Panc1 (cell line): ENCODE measurements at regions of chr1 and their contacts with region 1.

Region 1: DNA sequence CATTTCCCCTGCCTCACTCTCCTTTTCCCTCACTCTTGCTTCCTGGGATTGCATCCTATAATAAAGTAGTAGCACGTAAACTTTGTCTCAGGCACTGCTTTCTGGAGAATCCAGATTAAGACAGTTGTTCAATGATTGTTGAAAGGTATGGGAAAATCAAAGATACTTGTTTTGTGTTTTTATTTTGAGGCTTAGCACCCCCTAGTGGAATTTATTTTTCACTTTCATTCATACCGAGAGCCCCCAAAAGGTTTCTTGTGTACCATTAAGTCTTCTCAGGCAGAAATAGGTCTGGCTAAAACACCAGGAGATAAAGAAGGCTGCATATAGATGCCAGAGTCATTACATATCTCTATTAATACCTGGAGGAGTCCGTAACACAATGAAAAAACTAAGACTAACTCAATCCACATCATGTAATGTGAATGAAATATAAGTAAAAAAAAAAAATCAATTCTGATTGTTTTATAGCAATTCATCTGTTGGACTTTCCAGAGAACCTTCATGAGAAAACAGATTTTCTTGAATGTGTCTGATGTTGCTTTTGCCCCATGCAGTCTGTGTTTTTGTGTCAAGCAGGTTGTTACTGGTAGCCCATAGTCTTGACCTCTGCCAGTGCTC is 103.5 kb downstream of the RPE65 start:
- DNase-seq: no peak
- ATAC-seq: no peak
- H3K4me3 ChIP-seq: no peak overlapping the region
- H3K27ac ChIP-seq: no peak overlapping the region
- H3K4me1 ChIP-seq: no peaks in the 10 kb centered on the region
- H3K27me3 ChIP-seq: no peaks in the 10 kb centered on the region
- CTCF ChIP-seq: peak; percentile 62; the same call in 1 of the 2 replicates

Region 2: DNA sequence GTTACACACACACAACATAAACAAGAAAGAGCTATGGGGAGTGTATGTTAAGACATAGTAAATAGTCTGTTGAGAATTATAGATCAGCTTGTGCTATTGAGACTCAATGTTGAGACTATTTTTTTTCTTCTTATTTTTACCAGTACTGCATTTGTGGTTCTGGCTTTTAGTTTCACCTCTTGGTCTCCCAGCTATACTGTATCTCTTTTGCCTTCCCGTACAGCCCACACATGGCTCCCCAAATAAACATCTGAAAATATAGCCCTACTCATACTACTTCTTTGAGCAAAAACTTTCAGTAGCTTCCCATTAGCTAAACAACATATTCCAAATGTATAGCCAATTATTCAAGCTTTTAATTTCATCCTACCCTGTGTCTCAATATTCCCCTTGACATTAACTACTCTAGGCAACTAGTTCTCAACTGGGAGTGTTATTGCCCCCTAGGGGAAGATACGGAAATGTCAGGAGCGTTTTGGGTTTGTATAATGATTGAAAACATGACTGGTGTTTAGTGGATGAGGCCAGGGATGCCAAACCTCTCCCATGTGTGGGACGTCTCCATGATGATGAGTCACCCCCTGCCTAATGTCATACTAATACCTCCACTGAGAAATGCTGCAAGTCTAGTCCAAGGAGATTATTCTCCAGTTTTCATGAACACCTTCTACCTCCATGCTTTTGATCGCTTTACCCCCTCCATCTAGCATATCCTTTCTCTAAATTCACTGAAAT is 96.7 kb after region 1 on chr1:
- CTCF ChIA-PET with region 1: no interaction called
- POLR2A ChIA-PET with region 1: no interaction called
- in situ Hi-C with region 1: no loop called
- intact Hi-C with region 1: loop called (anchors 10 kb)
- DNase-seq: peak; percentile 48
- ATAC-seq: peak; percentile 81
- H3K4me3 ChIP-seq: no peak overlapping the region
- H3K27ac ChIP-seq: no peak overlapping the region
- H3K4me1 ChIP-seq: no peaks in the 10 kb centered on the region
- H3K27me3 ChIP-seq: no peaks in the 10 kb centered on the region; the same call in 1 of the 2 replicates
- CTCF ChIP-seq: peak; percentile 79

Region 3: DNA sequence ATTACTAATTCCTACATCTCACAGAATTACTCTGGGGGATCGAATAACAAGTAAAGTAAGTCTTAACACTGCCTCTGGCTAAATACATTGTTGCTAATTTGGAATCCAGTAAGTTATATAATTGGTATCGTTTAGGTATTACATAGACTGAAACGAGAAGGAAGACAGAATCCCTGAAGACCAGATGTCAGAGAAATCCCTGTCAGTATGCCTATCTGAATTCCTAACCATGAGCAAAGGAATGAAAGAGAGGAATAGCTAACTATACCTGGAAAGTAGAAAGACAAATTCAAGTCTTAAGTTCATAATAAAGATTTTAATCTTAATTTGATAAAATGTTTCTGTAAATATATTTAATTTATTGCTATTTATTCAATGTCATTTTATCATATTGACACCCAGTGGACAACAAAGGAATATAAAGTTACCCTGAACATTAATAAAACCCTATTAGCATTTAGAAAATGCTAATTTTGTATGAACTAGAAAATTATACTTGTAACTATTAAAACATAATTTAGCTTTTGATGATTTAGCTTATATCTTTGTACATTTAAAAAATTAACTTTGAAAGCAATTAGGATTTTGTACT is 139.2 kb after region 1 on chr1:
- CTCF ChIA-PET with region 1: no interaction called
- POLR2A ChIA-PET with region 1: no interaction called
- in situ Hi-C with region 1: no loop called
- intact Hi-C with region 1: no loop called
- DNase-seq: no peak
- ATAC-seq: no peak
- H3K4me3 ChIP-seq: no peak overlapping the region
- H3K27ac ChIP-seq: no peak overlapping the region
- H3K4me1 ChIP-seq: no peaks in the 10 kb centered on the region
- H3K27me3 ChIP-seq: no peaks in the 10 kb centered on the region
- CTCF ChIP-seq: no peak

Region 4: DNA sequence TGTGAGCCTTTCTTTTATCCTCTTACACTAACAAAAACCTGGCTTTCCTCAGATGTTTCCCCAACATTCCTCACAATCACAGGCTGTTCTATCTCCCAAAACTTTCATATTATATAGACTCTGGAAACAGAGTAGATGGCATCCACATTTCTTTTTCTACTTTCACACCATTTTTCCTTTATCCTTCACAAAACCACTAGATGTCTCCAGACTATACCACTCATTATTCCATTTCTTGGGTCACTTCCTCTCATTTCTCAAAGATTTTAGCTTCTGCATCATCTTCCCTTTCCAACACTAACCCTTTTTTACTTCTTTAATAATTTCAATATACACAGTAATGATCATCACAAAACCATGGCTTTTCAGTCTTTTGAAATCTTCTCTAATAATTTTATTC is 436.6 kb after region 1 on chr1:
- CTCF ChIA-PET with region 1: no interaction called
- POLR2A ChIA-PET with region 1: no interaction called
- in situ Hi-C with region 1: no loop called
- intact Hi-C with region 1: no loop called
- DNase-seq: no peak
- ATAC-seq: no peak
- H3K4me3 ChIP-seq: no peak overlapping the region
- H3K27ac ChIP-seq: no peak overlapping the region
- H3K4me1 ChIP-seq: no peaks in the 10 kb centered on the region
- H3K27me3 ChIP-seq: no peaks in the 10 kb centered on the region
- CTCF ChIP-seq: no peak; the same call in 1 of the 2 replicates